SK-N-SH (cell line): ENCODE measurements at regions of chr17 and their contacts with region 1.

Region 1: GRCh38 chr17:50169121-50169764 is 3.4 kb downstream of the SGCA start:
- DNase-seq: peak; percentile 90
- H3K4me3 ChIP-seq: no peak overlapping the region
- H3K27ac ChIP-seq: no peak overlapping the region
- H3K4me1 ChIP-seq: peaks cover 12 to 22% of the 10 kb centered on the region in 2 experiments
- H3K27me3 ChIP-seq: no peaks in the 10 kb centered on the region
- CTCF ChIP-seq: peak; percentile 99
- EP300 ChIP-seq: no peak; a peak in 1 of 4 replicates
- RAD21 ChIP-seq: peak; percentile 98

Region 2: GRCh38 chr17:50079334-50080095 is 89.7 kb before region 1 on chr17:
- CTCF ChIA-PET with region 1: no interaction called
- POLR2A ChIA-PET with region 1: no interaction called
- DNase-seq: no peak
- H3K4me3 ChIP-seq: no peak overlapping the region
- H3K27ac ChIP-seq: peak overlapping the region in 1 of 2 experiments; percentile 50; a peak in 1 of 4 replicates
- H3K4me1 ChIP-seq: no peaks in the 10 kb centered on the region
- H3K27me3 ChIP-seq: no peaks in the 10 kb centered on the region
- CTCF ChIP-seq: peak; percentile 71
- EP300 ChIP-seq: no peak
- RAD21 ChIP-seq: no peak; the same call in 1 of the 2 replicates

Region 3: DNA sequence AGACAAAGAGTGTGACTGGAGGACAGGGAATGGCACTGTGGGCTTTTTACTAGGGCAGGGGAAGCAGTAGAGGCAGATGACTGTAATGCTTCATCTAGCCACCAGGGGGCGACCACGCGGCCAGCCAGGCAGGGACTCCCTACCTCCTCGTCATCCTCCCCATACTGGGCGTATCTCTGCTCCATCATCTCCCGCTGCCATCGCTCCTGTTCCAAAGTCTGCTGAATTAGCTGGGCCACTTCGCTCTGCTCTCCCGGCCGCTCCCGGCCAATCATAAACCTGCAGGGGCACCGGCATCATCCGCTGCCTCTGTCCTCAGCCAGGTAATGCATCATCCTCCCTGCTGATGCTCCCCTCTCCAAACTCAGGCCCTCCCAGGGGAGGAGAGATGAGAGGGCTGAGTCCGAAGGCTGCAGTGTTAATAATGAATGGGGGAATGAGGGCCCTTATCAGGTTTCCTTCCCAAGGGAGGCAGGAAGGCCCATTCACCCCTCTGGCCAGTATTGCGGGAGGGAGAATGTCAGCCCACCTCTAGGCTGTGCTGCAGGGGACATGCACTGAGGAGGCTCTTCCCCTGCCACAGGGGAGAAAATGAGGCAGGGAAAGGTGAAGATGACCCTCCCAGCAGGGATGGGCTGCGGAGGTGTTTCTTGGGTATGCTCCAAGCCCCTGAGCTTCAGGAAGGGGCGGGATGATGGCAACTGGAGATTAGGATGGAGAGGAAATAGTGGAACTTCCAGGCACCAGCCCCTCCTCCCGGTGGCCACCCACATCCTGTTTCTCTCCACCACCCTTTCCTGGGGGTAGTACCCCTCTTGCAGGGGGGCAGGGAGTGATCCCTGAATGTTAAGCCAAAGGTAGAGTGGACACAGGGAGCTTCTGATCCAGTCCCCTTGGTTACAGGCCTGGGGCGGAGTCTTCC is 29.0 kb before region 1 on chr17:
- CTCF ChIA-PET with region 1: interaction called, 22 read pairs
- POLR2A ChIA-PET with region 1: no interaction called
- DNase-seq: peak; percentile 98
- H3K4me3 ChIP-seq: no peak overlapping the region; a peak in 1 of 4 replicates
- H3K27ac ChIP-seq: peak overlapping the region in 1 of 2 experiments; percentile 40; a peak in 2 of 4 replicates
- H3K4me1 ChIP-seq: peaks cover 0 to 7% of the 10 kb centered on the region in 2 experiments; a peak in 1 of 4 replicates
- H3K27me3 ChIP-seq: no peaks in the 10 kb centered on the region
- CTCF ChIP-seq: peak; percentile 96
- EP300 ChIP-seq: peak in 1 of 2 experiments; percentile 27; a peak in 1 of 4 replicates
- RAD21 ChIP-seq: peak; percentile 82

Region 4: DNA sequence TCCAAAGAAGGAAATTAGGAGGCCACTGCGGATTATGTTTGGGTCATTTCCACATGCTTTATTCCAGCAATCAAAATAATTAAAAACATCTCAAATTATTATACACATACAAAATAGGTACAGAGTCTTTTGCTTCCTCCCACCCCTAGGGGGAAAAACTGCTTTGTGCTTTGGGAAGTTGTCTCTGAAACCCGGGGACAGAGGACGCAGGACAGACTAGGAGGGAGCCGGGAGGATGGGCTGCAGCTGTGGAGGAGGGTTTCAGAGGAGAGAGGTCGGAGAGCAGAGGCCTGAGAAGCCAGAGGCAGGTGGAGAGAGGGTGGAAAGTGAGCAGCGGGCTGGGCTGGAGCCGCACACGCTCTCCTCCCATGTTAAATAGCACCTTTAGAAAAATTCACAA is 14.8 kb after region 1 on chr17:
- CTCF ChIA-PET with region 1: interaction called, 463 read pairs
- POLR2A ChIA-PET with region 1: interaction called, 3 read pairs
- DNase-seq: peak; percentile 71
- H3K4me3 ChIP-seq: no peak overlapping the region
- H3K27ac ChIP-seq: peak overlapping the region in 1 of 2 experiments; percentile 100; a peak in 2 of 4 replicates
- H3K4me1 ChIP-seq: peaks cover 0 to 17% of the 10 kb centered on the region in 2 experiments; a peak in 1 of 4 replicates
- H3K27me3 ChIP-seq: no peaks in the 10 kb centered on the region
- CTCF ChIP-seq: peak; percentile 46
- EP300 ChIP-seq: no peak
- RAD21 ChIP-seq: no peak

Region 5: DNA sequence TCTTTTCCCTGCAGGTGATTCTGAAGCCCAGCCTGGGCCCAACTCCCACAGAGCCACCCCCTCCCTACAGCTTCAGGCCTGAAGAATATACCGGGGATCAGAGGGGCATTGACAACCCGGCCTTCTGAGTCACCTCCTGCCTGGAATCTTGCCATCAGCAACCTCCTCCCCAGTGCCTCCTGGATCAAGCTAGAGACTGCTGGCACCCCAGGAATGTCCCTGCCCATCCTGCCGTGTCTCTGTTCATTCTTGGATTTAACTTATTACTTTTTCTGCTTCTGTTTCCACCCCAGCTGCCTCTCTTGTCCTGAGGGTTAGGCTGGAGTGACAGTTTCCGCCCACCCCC is 109.9 kb after region 1 on chr17:
- CTCF ChIA-PET with region 1: interaction called, 101 read pairs
- POLR2A ChIA-PET with region 1: interaction called, 3 read pairs
- DNase-seq: no peak
- H3K4me3 ChIP-seq: no peak overlapping the region
- H3K27ac ChIP-seq: peak overlapping the region; percentile 20; a peak in 2 of 4 replicates
- H3K4me1 ChIP-seq: peaks cover 7 to 26% of the 10 kb centered on the region in 2 experiments; a peak in 3 of 4 replicates
- H3K27me3 ChIP-seq: no peaks in the 10 kb centered on the region
- CTCF ChIP-seq: no peak
- EP300 ChIP-seq: no peak; a peak in 1 of 4 replicates
- RAD21 ChIP-seq: no peak

Region 6: DNA sequence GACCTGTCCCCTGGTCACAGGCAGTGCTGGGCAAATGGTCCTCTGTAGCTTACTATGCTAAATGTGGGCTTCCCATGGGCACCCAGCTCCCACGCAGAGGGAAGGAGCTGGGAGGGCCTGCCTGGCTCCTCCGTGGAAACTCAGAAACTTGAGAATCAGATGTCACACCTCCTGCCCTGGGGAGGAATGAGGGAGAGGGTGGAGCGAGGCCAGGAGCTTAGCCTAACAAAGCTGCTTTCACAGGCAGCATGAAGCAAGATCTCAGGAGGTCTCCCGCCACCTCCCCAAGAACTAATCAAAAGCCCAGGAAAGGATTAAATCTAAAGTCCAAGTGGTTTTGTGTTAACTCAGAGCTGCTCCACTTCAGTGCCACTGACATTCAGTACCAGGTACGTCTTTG is 143.1 kb after region 1 on chr17:
- CTCF ChIA-PET with region 1: interaction called, 388 read pairs
- POLR2A ChIA-PET with region 1: no interaction called
- DNase-seq: no peak
- H3K4me3 ChIP-seq: no peak overlapping the region
- H3K27ac ChIP-seq: no peak overlapping the region
- H3K4me1 ChIP-seq: no peaks in the 10 kb centered on the region; a peak in 1 of 4 replicates
- H3K27me3 ChIP-seq: 0 out of 2 replicates have a peak, but pooled peaks cover 9% of the 10 kb centered on the region
- CTCF ChIP-seq: no peak
- EP300 ChIP-seq: no peak
- RAD21 ChIP-seq: no peak